KBM-7 (cell line): ENCODE measurements at regions of chr15 and their contacts with region 1.

Region 1: GRCh38 chr15:24856397-24857390 is 98.1 kb upstream of the SNRPN start:
- DNase-seq: no peak

Region 2: GRCh38 chr15:24956111-24956838 is 99.6 kb after region 1 on chr15:
- in situ Hi-C with region 1: loop called (anchors 25 kb)
- DNase-seq: no peak